B cell (primary cell): ENCODE measurements at regions of chr10 and their contacts with region 1.

Region 1: GRCh38 chr10:102352066-102352715 is 43.3 kb upstream of the NFKB2 start:
- DNase-seq: peak; percentile 78
- ATAC-seq: peak; percentile 56
- H3K4me3 ChIP-seq: no peak overlapping the region
- H3K4me3 Mint-ChIP-seq: no peak overlapping the region
- H3K27ac ChIP-seq: no peak overlapping the region
- H3K27ac Mint-ChIP-seq: no peak overlapping the region
- H3K4me1 ChIP-seq: no peaks in the 10 kb centered on the region
- H3K4me1 Mint-ChIP-seq: no peaks in the 10 kb centered on the region
- H3K27me3 ChIP-seq: no peaks in the 10 kb centered on the region
- H3K27me3 Mint-ChIP-seq: no peaks in the 10 kb centered on the region
- CTCF ChIP-seq: peak; percentile 90

Region 2: DNA sequence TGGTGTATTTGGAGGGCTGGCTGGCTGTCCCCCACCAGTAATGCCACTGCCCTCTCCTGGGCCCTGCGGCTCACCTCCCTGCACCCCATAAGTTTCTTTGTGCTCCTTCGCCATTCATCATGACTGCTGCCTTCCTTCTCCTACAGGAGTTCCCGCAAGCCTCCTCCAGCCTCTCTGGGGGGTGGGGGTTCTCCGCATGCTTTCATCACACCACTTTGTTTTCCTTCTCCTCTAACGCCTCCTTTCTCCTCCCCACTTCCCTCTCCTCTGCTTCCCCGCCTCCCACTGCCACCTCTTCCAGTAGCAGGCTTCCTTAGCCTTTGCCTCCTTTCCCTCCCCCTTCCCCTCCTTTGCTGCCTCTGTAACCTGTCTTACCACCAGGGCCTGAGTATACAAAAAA is 1548.7 kb before region 1 on chr10:
- CTCF ChIA-PET with region 1: no interaction called
- POLR2A ChIA-PET with region 1: no interaction called
- intact Hi-C with region 1: no loop called
- DNase-seq: no peak
- ATAC-seq: no peak
- H3K4me3 ChIP-seq: no peak overlapping the region
- H3K4me3 Mint-ChIP-seq: no peak overlapping the region
- H3K27ac ChIP-seq: no peak overlapping the region
- H3K27ac Mint-ChIP-seq: no peak overlapping the region
- H3K4me1 ChIP-seq: no peaks in the 10 kb centered on the region
- H3K4me1 Mint-ChIP-seq: peaks cover 5% of the 10 kb centered on the region
- H3K27me3 ChIP-seq: peaks cover 0 to 63% (median 7%) of the 10 kb centered on the region in 4 experiments
- H3K27me3 Mint-ChIP-seq: peaks cover 74% of the 10 kb centered on the region
- CTCF ChIP-seq: no peak

Region 3: GRCh38 chr10:102167861-102168260 is 184.3 kb before region 1 on chr10:
- CTCF ChIA-PET with region 1: interaction called, 80 read pairs
- POLR2A ChIA-PET with region 1: no interaction called
- intact Hi-C with region 1: loop called (anchors 1 kb)
- DNase-seq: no peak
- ATAC-seq: no peak
- H3K4me3 ChIP-seq: no peak overlapping the region
- H3K4me3 Mint-ChIP-seq: no peak overlapping the region
- H3K27ac ChIP-seq: no peak overlapping the region
- H3K27ac Mint-ChIP-seq: no peak overlapping the region
- H3K4me1 ChIP-seq: peaks cover 7 to 8% of the 10 kb centered on the region in 2 donors
- H3K4me1 Mint-ChIP-seq: peaks cover 6% of the 10 kb centered on the region
- H3K27me3 ChIP-seq: no peaks in the 10 kb centered on the region
- H3K27me3 Mint-ChIP-seq: no peaks in the 10 kb centered on the region
- CTCF ChIP-seq: no peak

Region 4: GRCh38 chr10:102327002-102327401 is 25.2 kb before region 1 on chr10:
- CTCF ChIA-PET with region 1: interaction called, 19 read pairs
- POLR2A ChIA-PET with region 1: no interaction called
- intact Hi-C with region 1: no loop called
- DNase-seq: no peak
- ATAC-seq: no peak
- H3K4me3 ChIP-seq: no peak overlapping the region
- H3K4me3 Mint-ChIP-seq: no peak overlapping the region
- H3K27ac ChIP-seq: no peak overlapping the region
- H3K27ac Mint-ChIP-seq: no peak overlapping the region
- H3K4me1 ChIP-seq: peaks cover 0 to 2% of the 10 kb centered on the region in 2 donors
- H3K4me1 Mint-ChIP-seq: peaks cover 29% of the 10 kb centered on the region
- H3K27me3 ChIP-seq: no peaks in the 10 kb centered on the region
- H3K27me3 Mint-ChIP-seq: no peaks in the 10 kb centered on the region
- CTCF ChIP-seq: no peak

Region 5: DNA sequence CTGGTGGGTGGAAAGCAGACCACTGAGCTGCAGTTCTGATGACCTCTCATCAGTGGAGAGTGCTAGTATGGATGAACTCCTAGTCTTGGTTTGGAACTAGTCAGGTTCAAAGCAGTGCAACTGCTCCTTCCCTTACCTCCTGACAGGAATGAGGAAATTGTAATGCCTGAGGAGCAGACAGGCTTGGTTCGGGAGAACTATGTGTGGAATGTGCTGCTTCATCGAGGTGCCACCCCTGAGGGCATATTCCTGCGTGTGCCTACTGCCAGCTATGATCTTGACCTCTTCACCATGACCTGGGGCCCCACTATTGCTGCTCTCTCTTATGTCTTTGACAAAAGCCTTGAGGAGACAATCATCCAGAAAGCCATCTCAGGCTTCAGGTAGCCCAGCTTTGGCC is 15.9 kb after region 1 on chr10:
- CTCF ChIA-PET with region 1: interaction called, 38 read pairs
- POLR2A ChIA-PET with region 1: no interaction called
- intact Hi-C with region 1: no loop called
- DNase-seq: no peak
- ATAC-seq: no peak
- H3K4me3 ChIP-seq: no peak overlapping the region
- H3K4me3 Mint-ChIP-seq: no peak overlapping the region
- H3K27ac ChIP-seq: no peak overlapping the region
- H3K27ac Mint-ChIP-seq: no peak overlapping the region
- H3K4me1 ChIP-seq: no peaks in the 10 kb centered on the region
- H3K4me1 Mint-ChIP-seq: no peaks in the 10 kb centered on the region
- H3K27me3 ChIP-seq: no peaks in the 10 kb centered on the region
- H3K27me3 Mint-ChIP-seq: no peaks in the 10 kb centered on the region
- CTCF ChIP-seq: no peak

Region 6: GRCh38 chr10:102413053-102413705 is 61.0 kb after region 1 on chr10:
- CTCF ChIA-PET with region 1: no interaction called
- POLR2A ChIA-PET with region 1: no interaction called
- intact Hi-C with region 1: no loop called
- DNase-seq: peak; percentile 45
- ATAC-seq: no peak
- H3K4me3 ChIP-seq: no peak overlapping the region
- H3K4me3 Mint-ChIP-seq: no peak overlapping the region
- H3K27ac ChIP-seq: no peak overlapping the region
- H3K27ac Mint-ChIP-seq: no peak overlapping the region
- H3K4me1 ChIP-seq: peaks cover 26 to 32% of the 10 kb centered on the region in 2 donors
- H3K4me1 Mint-ChIP-seq: peaks cover 31% of the 10 kb centered on the region
- H3K27me3 ChIP-seq: peaks cover 0 to 91% (median 52%) of the 10 kb centered on the region in 4 experiments
- H3K27me3 Mint-ChIP-seq: peaks cover 65% of the 10 kb centered on the region
- CTCF ChIP-seq: no peak

Region 7: GRCh38 chr10:102484021-102484420 is 131.8 kb after region 1 on chr10:
- CTCF ChIA-PET with region 1: interaction called, 15 read pairs
- POLR2A ChIA-PET with region 1: no interaction called
- intact Hi-C with region 1: loop called (anchors 1 kb)
- DNase-seq: no peak
- ATAC-seq: no peak
- H3K4me3 ChIP-seq: no peak overlapping the region
- H3K4me3 Mint-ChIP-seq: no peak overlapping the region
- H3K27ac ChIP-seq: no peak overlapping the region
- H3K27ac Mint-ChIP-seq: no peak overlapping the region
- H3K4me1 ChIP-seq: peaks cover 0 to 3% of the 10 kb centered on the region in 2 donors
- H3K4me1 Mint-ChIP-seq: peaks cover 3% of the 10 kb centered on the region
- H3K27me3 ChIP-seq: no peaks in the 10 kb centered on the region
- H3K27me3 Mint-ChIP-seq: no peaks in the 10 kb centered on the region
- CTCF ChIP-seq: no peak

Region 8: GRCh38 chr10:102540023-102540422 is 187.8 kb after region 1 on chr10:
- CTCF ChIA-PET with region 1: no interaction called
- POLR2A ChIA-PET with region 1: no interaction called
- intact Hi-C with region 1: no loop called
- DNase-seq: no peak
- ATAC-seq: no peak
- H3K4me3 ChIP-seq: no peak overlapping the region
- H3K4me3 Mint-ChIP-seq: no peak overlapping the region
- H3K27ac ChIP-seq: no peak overlapping the region
- H3K27ac Mint-ChIP-seq: no peak overlapping the region
- H3K4me1 ChIP-seq: peaks cover 5 to 8% of the 10 kb centered on the region in 2 donors
- H3K4me1 Mint-ChIP-seq: peaks cover 18% of the 10 kb centered on the region
- H3K27me3 ChIP-seq: no peaks in the 10 kb centered on the region
- H3K27me3 Mint-ChIP-seq: no peaks in the 10 kb centered on the region
- CTCF ChIP-seq: peak; percentile 37